ENCODE measurements at regions of chr21 and their contacts with region 1.

Region 1: GRCh38 chr21:44734026-44734745 is 22.8 kb upstream of the TSPEAR start:
- DNase-seq: no peak
- H3K27ac ChIP-seq: no peak overlapping the region; the same call in 1 of the 2 replicates
- CTCF ChIP-seq: no peak

Region 2: GRCh38 chr21:44718571-44718970 is 15.6 kb before region 1 on chr21:
- CTCF ChIA-PET with region 1: interaction called, 10 read pairs
- POLR2A ChIA-PET with region 1: no interaction called
- DNase-seq: no peak
- H3K27ac ChIP-seq: no peak overlapping the region
- CTCF ChIP-seq: no peak

Region 3: DNA sequence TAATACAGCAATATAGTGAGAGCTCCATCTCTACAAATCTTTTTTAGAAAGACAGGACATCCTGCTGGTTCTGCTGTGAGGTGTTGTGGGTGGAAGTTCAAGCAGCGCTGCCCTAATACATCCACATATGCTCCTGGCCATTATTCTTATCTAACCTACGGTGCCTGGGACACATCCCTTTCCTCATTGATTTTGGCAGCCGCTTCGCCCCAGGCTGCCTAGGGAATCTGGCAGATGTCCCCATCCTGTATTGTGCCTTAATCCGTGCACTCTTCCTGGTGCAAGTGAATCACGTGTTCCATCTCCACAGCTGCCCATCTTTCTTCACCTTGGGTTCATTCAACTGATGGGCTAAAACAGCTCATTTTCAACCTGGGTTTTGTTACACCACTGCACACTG is 70.6 kb after region 1 on chr21:
- CTCF ChIA-PET with region 1: no interaction called
- POLR2A ChIA-PET with region 1: no interaction called
- DNase-seq: no peak
- H3K27ac ChIP-seq: 0 out of 2 replicates have a peak overlapping the region, but pooled peaks have one; percentile 22
- CTCF ChIP-seq: no peak